ENCODE measurements at regions of chr10 and their contacts with region 1.

Region 1: DNA sequence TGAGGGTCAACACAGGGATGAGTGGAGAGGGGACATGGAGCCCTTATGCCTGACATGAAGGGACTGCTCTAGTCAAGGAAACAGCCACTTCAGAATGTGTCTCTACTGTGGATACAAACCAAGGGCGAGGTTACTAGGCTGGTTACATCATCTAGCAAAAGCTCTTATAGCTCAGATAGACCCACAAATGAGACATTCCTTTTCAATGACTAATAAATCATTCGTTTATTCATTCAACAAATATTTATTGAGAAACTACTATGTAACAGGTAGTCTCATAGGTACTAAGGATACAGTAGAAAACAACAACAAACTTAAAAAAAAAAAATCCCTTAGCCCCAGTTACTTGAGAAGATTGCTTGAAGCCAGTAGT is 219.5 kb downstream of the KIAA1217 start:
- DNase-seq: no peak
- CTCF ChIP-seq: no peak

Region 2: DNA sequence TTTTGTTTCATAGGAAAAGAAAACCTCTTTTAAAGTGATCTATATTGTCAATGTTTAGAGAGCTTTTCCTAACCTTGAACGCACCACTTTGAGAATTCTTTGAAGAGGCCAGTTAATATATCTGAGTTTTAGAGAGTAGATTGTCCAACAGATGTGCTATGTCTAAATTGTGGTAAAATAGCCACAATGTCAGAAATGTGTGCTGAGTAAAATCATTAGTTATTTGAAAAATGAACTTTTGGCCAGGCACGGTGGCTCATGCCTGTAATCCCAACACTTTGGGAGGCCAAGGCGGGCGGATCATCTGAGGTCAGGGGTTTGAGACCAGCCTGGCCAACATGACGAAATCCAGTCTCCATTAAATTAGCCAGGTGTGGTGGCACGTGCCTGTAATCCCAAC is 281.1 kb before region 1 on chr10:
- CTCF ChIA-PET with region 1: no interaction called
- POLR2A ChIA-PET with region 1: no interaction called
- DNase-seq: no peak
- CTCF ChIP-seq: no peak

Region 3: DNA sequence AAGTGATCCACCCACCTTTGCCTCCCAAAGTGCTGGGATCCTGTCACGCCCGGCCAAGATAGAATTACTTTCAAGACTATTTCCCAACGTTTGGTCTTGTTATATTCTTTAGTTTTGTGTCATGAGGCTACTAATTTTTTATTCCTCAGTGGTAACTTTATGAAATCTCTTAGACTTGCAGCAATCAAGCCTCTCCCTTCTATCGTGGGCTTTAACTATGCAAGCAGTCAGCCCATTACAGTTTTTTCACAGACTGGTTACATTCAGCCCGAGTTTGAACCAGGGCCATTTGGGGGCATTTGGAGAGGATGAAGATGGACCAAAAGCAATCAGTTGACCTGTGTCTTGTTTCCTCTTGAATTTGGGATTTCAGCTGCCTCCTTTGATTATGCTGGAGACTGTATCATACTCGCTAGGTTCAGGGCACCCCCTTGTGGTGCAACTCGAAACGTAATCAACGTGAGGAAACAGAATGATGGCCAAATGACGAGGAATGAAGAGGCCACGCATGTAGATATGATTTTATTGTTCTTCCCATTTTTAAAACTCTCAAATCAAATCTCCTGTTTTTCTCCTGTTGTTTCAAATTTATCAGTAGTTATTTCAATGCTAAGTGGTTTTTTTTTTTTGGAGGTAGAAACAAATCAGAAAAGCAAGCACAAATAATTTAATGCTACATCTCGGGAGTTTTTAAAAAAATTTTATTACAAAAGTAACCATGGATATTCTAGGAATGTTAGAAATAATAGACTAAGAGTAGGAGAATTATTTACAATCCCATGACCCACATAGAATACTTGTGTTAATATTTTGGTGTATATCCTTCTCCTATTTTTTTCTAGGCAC is 67.9 kb before region 1 on chr10:
- CTCF ChIA-PET with region 1: no interaction called
- POLR2A ChIA-PET with region 1: no interaction called
- DNase-seq: peak; percentile 50
- CTCF ChIP-seq: peak; percentile 62

Region 4: GRCh38 chr10:24404567-24404966 is 23.8 kb before region 1 on chr10:
- CTCF ChIA-PET with region 1: no interaction called
- POLR2A ChIA-PET with region 1: no interaction called
- DNase-seq: no peak
- CTCF ChIP-seq: no peak

Region 5: DNA sequence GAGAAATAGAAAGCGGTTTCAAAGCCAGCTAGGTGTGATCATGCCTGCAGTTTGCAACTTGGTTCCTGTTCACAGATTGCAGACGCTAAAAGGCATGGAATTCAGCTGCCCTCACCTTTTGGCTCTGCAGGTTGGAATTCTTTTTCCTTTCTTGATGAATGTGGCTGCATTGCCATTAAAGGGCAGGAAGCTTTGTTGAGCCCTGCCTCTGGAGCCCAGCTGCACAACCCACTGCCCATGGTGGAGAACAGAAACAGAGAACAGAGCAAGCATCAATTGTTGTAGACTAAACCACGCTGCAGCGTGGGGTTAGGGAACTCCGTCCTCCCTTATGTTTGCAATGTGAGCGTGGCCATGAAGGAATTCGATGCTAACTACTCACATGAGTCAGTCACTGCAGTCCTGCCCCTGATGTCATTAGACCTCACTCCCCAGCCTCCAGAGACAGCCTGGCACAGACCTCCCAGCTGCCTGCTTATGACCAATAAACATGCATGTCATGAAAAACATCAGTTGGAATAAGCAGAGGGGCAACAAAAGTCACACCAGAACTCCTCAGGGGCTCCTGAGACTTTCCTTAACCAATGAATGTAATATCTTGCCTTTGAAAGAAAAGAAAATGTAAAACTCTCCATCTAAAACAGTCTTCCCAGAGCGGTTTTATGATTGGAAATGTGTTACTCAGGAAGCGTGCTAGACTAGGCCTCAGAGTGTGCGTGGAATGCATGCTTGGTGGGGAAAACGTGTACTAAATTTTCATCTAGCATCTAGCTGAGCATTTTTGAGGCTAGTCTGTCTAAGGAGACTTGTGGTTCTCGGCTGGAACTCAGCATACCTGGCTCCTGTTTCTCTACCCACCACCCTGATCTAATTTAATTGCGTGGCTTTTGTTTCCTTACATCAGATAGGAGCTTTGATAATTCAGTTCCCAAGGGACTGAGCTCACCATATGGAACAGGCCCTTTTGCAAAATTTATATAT is 12.7 kb after region 1 on chr10:
- CTCF ChIA-PET with region 1: interaction called, 12 read pairs
- POLR2A ChIA-PET with region 1: no interaction called
- DNase-seq: no peak
- CTCF ChIP-seq: no peak

Measured in GM10248 (cell line).